ENCODE measurements at regions of chr20 and their contacts with region 1.

Region 1: GRCh38 chr20:34312544-34313217 is 9.5 kb upstream of the AHCY start:
- DNase-seq: peak; percentile 93
- ATAC-seq: peak; percentile 100
- H3K4me3 Mint-ChIP-seq: peak overlapping the region; percentile 22
- H3K27ac Mint-ChIP-seq: no peak overlapping the region
- H3K4me1 Mint-ChIP-seq: peaks cover 21% of the 10 kb centered on the region
- H3K27me3 Mint-ChIP-seq: peaks cover 24% of the 10 kb centered on the region

Region 2: DNA sequence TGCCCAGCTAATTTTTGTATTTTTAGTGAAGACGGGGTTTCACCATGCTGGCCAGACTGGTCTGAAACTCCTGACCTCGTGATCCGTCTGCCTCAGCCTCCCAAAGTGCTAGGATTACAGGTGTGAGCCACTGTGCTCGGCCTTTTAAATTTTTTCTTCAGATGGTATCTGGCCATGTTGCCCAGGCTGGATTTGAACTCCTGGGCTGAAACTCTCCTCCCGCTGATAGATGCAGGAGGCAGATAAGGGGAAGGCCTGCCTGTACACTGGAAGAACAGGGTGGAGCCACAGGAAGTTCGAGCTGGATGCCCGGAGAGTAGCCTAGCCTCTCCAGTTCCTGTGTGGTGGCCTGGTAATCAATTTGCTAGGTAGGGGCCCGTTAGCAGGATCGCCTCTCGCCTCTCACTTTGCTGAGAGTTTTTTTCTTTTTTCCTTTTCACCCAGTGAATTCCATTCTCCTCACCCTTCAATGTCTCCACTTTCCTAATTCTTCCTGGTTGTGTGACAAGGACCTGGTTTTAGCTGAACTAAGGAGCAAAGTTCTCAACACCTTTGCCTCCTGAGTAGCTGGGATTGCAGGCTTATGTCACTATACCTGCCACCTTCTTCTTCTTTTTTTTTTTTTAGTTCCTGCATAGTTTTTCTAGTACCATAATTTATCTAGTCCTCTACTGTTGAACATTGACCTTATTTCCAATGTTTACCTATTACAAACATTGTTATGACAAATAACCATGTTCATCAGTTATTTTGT is 31.0 kb after region 1 on chr20:
- CTCF ChIA-PET with region 1: interaction called, 11 read pairs
- POLR2A ChIA-PET with region 1: no interaction called
- DNase-seq: no peak
- ATAC-seq: no peak
- H3K4me3 Mint-ChIP-seq: no peak overlapping the region
- H3K27ac Mint-ChIP-seq: no peak overlapping the region
- H3K4me1 Mint-ChIP-seq: no peaks in the 10 kb centered on the region
- H3K27me3 Mint-ChIP-seq: no peaks in the 10 kb centered on the region

Region 3: GRCh38 chr20:34426026-34426425 is 113.3 kb after region 1 on chr20:
- CTCF ChIA-PET with region 1: interaction called, 14 read pairs
- POLR2A ChIA-PET with region 1: no interaction called
- DNase-seq: no peak
- ATAC-seq: no peak
- H3K4me3 Mint-ChIP-seq: no peak overlapping the region
- H3K27ac Mint-ChIP-seq: no peak overlapping the region
- H3K4me1 Mint-ChIP-seq: no peaks in the 10 kb centered on the region
- H3K27me3 Mint-ChIP-seq: no peaks in the 10 kb centered on the region

Region 4: DNA sequence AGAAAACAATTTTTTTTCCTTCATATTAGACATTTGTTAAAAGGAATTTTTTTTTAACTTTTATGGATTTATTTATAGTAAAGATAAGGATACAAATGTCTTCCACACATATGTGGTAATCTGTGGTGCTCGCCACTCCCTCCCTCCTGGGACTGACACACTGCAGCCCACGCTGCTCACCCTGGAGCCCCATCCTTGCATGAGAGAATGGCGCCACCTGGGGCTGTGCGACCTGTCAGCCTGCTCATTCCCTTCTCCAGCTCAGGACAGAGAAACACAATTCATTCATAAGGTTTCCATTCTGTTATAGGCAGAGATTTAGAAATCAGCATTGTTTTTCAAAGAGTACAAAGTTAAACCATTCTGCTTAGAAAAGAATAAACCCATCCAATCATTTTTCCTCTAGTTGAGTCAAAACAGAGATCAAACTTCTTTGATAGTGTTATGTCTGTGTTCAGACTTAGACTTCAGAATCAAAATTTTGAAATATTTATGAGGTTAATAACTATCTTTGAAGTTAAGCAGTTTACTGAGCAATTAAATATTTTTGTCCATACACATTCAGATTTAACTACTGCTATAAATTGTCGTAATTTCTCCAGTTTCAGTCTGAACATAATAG is 160.7 kb after region 1 on chr20:
- CTCF ChIA-PET with region 1: interaction called, 79 read pairs
- POLR2A ChIA-PET with region 1: no interaction called
- DNase-seq: peak; percentile 52
- ATAC-seq: no peak
- H3K4me3 Mint-ChIP-seq: no peak overlapping the region
- H3K27ac Mint-ChIP-seq: no peak overlapping the region
- H3K4me1 Mint-ChIP-seq: peaks cover 12% of the 10 kb centered on the region
- H3K27me3 Mint-ChIP-seq: no peaks in the 10 kb centered on the region

Region 5: DNA sequence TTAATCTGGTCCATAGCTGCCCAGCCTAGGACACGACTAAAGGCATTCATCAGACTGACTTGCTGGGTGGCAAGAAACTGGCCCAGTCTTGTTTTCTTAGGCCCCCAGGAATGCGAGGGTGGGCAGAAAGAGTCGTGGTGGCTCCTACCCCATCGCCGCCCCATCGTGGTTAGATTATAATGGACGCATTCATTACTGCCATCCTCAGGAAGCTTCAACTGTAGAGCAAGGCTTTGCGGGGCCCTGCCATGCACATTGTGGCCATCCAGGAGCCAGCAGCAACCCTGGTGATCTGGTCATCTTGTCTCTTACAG is 219.7 kb after region 1 on chr20:
- CTCF ChIA-PET with region 1: interaction called, 19 read pairs
- POLR2A ChIA-PET with region 1: no interaction called
- DNase-seq: no peak
- ATAC-seq: no peak
- H3K4me3 Mint-ChIP-seq: no peak overlapping the region
- H3K27ac Mint-ChIP-seq: no peak overlapping the region
- H3K4me1 Mint-ChIP-seq: peaks cover 2% of the 10 kb centered on the region
- H3K27me3 Mint-ChIP-seq: no peaks in the 10 kb centered on the region

Region 6: DNA sequence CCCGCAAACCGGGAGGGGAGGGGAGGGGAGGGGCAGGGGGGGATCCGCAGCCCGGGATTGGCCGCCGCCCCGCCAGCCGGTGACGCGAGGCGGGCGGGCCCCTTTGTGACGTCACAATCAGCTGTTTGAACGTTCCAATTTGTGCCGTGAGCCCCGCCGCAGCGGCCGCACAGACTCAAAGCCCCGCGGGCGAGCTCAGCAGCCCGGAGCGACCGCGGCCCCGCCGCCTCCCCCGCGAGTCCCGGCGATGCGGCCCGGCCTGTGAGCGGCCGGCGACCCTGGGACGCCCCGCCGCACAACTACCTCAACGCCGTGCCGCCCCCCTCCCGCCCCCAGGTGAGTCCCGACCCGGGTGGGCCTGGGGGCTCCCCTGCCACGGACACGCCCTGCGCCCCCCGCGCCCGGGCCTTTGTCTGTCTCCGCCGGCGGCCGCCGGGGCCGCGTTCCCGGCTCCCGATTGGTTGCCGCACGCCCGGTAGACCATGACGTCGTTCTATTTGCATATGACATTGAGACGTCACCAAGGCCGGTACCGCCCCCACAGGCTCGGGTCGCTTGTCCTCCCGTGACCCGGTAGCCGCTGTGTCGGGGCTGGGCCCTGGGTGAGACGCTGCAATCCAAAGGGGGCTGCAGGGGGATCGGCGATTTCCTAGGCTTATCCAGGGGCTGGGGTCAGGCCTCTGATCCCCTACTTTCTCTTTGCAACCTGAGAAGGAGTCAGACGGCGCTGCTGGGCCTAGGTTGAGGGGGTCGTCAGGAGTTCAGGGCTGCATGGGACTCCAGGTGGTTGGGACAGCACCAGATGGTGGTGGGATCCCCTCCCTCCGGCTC is 391.7 kb after region 1 on chr20 and contains the start of gene TP53INP2:
- CTCF ChIA-PET with region 1: interaction called, 59 read pairs
- POLR2A ChIA-PET with region 1: no interaction called
- DNase-seq: peak; percentile 91
- ATAC-seq: peak; percentile 57
- H3K4me3 Mint-ChIP-seq: peak within 1 kb of the TSS; percentile 85
- H3K27ac Mint-ChIP-seq: peak within 1 kb of the TSS; percentile 92
- H3K4me1 Mint-ChIP-seq: peaks cover 37% of the 10 kb centered on the region
- H3K27me3 Mint-ChIP-seq: peaks cover 15% of the 10 kb centered on the region
- total RNA-seq, gene TP53INP2: 2.0 to 2.1 TPM

Measured in activated CD8-positive, alpha-beta T cell treated with anti-CD3 and anti-CD28 coated beads, Interleukin-2, amount 10 ng/mL, durations not matched to agents 7 days and 5 days (primary cell).